ENCODE measurements at regions of chr9 and their contacts with region 1.

Region 1: GRCh38 chr9:5714501-5715401 is 85.8 kb downstream of the RIC1 start:
- DNase-seq: peak; percentile 49
- H3K4me3 ChIP-seq: no peak overlapping the region
- H3K27ac ChIP-seq: peak overlapping the region; percentile 14
- H3K4me1 ChIP-seq: no peaks in the 10 kb centered on the region
- H3K27me3 ChIP-seq: no peaks in the 10 kb centered on the region
- CTCF ChIP-seq: peak; percentile 70 to 71

Region 2: GRCh38 chr9:5186416-5187169 is 528.2 kb before region 1 on chr9:
- CTCF ChIA-PET with region 1: no interaction called
- dilution Hi-C with region 1: no loop called
- in situ Hi-C with region 1: no loop called
- intact Hi-C with region 1: loop called (anchors 10 kb)
- DNase-seq: peak; percentile 55
- H3K4me3 ChIP-seq: no peak overlapping the region
- H3K27ac ChIP-seq: no peak overlapping the region
- H3K4me1 ChIP-seq: no peaks in the 10 kb centered on the region
- H3K27me3 ChIP-seq: no peaks in the 10 kb centered on the region
- CTCF ChIP-seq: peak; percentile 71 to 87

Region 3: DNA sequence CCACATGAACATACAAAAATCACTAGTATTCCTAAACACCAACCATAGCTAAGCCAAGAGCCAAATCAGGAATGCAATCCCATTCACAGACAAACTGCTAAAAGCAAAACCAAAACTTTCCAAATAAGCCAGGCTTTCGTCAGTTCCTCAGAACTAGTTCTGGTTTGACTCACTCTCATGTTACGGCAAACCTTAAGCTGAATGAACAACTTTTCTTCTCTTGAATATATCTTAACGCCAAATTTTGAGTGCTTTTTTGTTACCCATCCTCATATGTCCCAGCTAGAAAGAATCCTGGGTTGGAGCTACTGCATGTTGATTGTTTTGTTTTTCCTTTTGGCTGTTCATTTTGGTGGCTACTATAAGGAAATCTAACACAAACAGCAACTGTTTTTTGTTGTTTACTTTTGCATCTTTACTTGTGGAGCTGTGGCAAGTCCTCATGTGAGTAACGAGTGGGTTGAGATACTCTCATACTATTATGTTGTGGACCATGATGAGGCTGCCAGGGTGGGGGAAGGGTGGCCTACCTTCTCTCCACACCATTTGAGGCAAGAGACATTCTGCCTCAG is 204.3 kb before region 1 on chr9 and contains the start of gene PDCD1LG2:
- CTCF ChIA-PET with region 1: no interaction called
- dilution Hi-C with region 1: no loop called
- in situ Hi-C with region 1: no loop called
- intact Hi-C with region 1: loop called (anchors 10 kb)
- DNase-seq: peak; percentile 75
- H3K4me3 ChIP-seq: peak within 1 kb of the TSS; percentile 27 to 51 (median 47)
- H3K27ac ChIP-seq: peak within 1 kb of the TSS; percentile 89
- H3K4me1 ChIP-seq: peaks cover 54% of the 10 kb centered on the region
- H3K27me3 ChIP-seq: no peaks in the 10 kb centered on the region
- CTCF ChIP-seq: no peak
- total RNA-seq, gene PDCD1LG2: 12.1 to 14.5 TPM

Region 4: DNA sequence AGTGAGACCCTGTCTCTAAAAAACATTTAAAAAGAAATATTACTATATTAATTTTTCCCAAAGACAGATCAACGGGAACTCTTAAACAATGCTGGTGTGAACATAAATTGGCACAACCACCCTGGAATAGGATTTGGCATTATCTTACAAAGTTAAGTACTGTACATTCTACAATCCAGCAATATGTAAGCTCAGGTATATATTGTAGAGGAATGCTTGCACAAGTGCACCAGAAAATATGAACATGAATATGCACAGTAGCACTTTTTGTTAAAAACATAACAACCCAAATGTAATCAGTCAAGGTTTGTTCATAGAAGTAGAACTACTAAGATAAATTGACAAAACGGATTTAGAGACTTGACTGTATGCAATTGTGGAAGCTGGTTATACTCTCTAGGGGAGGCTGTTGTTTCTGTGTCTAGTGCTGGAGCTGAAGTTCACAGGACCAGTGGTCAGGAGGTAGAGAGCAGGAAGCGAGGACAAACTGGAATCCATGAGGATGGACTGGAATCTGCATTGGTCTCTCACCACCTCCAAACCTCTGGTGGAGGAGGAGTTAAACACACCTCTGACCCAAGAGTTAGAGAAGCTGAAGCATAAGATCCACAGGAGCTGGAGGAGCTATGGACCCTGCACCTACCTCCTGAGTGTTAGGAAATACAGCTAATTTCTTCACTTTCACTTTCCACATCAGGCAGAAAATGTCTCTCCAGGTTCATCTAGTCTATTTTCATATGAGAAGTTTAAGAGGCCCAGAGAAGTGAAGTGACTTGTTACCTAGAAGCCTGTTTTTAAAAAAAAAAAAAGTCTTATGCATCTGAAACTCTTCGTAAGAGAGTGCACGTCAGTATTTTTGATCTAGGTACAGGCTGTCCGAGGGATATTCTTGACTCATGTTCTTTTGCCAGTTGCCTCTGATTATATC is 106.2 kb before region 1 on chr9:
- CTCF ChIA-PET with region 1: no interaction called
- dilution Hi-C with region 1: no loop called
- in situ Hi-C with region 1: no loop called
- intact Hi-C with region 1: loop called (anchors 1 kb)
- DNase-seq: peak; percentile 46
- H3K4me3 ChIP-seq: peak overlapping the region; percentile 18 to 36 (median 25)
- H3K27ac ChIP-seq: no peak overlapping the region
- H3K4me1 ChIP-seq: peaks cover 3% of the 10 kb centered on the region
- H3K27me3 ChIP-seq: no peaks in the 10 kb centered on the region
- CTCF ChIP-seq: no peak

Region 5: GRCh38 chr9:5628530-5629311 is 86.0 kb before region 1 on chr9 and contains the start of gene RIC1:
- CTCF ChIA-PET with region 1: no interaction called
- dilution Hi-C with region 1: no loop called
- in situ Hi-C with region 1: no loop called
- intact Hi-C with region 1: loop called (anchors 1 kb)
- DNase-seq: peak; percentile 92
- H3K4me3 ChIP-seq: peak within 1 kb of the TSS; percentile 65 to 94 (median 84)
- H3K27ac ChIP-seq: peak within 1 kb of the TSS; percentile 84
- H3K4me1 ChIP-seq: peaks cover 25% of the 10 kb centered on the region
- H3K27me3 ChIP-seq: no peaks in the 10 kb centered on the region
- CTCF ChIP-seq: no peak
- total RNA-seq, gene RIC1: 23.0 to 46.3 TPM

Region 6: DNA sequence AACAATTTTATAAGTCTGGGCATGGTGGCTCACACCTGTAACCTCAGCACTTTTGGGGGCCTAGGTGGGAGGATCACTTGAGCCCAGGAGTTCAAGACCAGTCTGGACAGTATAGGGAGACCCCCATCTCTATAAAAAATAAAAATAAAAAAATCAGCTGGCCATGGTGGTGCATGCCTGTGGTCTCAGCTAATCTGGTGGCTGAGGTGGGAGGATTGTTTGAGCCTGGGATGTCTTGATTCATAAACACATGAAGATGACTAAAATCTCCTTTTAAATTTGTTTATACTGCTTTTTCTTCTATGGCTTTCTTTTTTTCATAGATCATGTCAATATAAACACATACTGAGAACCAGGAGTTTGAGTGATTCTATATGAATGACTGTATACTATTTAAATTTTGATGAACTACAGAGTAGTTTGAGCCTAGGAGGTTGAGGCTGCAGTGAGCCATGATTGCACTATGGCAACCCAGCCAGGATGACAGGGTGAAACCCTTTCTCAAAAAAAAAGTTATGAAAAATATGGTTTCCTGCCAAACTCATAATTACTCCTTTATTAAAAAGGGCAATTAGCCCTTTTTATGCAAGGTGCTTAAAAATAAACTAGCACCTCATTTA is 71.6 kb before region 1 on chr9:
- CTCF ChIA-PET with region 1: no interaction called
- dilution Hi-C with region 1: no loop called
- in situ Hi-C with region 1: no loop called
- intact Hi-C with region 1: no loop called
- DNase-seq: no peak
- H3K4me3 ChIP-seq: no peak overlapping the region
- H3K27ac ChIP-seq: no peak overlapping the region
- H3K4me1 ChIP-seq: no peaks in the 10 kb centered on the region
- H3K27me3 ChIP-seq: no peaks in the 10 kb centered on the region
- CTCF ChIP-seq: no peak

Region 7: DNA sequence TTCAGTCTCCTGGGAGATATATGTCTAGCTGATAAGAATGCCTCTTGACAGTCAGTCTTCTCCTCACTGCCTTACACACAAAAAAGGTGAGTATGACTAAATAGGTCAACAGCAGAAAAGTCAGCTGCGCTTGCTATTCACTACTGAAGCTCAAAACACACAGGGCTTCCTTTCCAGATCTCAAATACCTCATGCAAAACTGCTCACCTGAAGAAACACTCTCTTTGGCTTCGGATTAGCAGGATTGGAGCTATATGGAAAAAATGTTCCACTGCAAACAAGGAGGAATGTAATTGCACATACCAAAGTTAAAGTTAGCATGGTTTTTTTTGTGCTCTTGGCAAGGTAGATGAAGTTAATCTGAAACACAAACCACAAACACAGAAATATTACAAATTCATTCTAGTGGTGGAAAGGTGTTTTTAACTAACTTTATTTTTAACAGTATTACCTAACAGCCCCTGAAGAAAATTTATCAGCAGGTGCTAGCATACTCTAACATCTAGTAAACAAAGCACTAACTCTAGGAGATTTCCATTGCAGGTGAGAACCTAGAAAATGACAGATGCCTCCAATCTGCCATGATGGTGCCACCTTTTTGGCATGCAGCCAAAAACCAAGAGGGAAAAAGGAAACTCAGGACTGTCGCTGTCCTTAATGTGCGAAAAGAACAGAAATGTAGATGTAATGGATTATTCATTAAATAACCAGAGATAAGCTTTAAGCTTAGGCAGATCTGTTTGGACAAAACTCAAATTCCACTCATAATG is 86.4 kb after region 1 on chr9:
- CTCF ChIA-PET with region 1: no interaction called
- dilution Hi-C with region 1: no loop called
- in situ Hi-C with region 1: no loop called
- intact Hi-C with region 1: no loop called
- DNase-seq: no peak
- H3K4me3 ChIP-seq: no peak overlapping the region
- H3K27ac ChIP-seq: no peak overlapping the region
- H3K4me1 ChIP-seq: no peaks in the 10 kb centered on the region
- H3K27me3 ChIP-seq: no peaks in the 10 kb centered on the region
- CTCF ChIP-seq: no peak

Measured in mammary epithelial cell (primary cell).